Ascending aorta (tissue), 2 donors: ENCODE measurements at regions of chr19 and their contacts with region 1.

Region 1: GRCh38 chr19:14136509-14137281 is at the start of gene ASF1B:
- DNase-seq: peak; percentile 98 to 99
- H3K4me3 ChIP-seq: peak within 1 kb of the TSS; percentile 76 to 85
- H3K27ac ChIP-seq: peak within 1 kb of the TSS; percentile 98
- H3K4me1 ChIP-seq: peaks cover 11 to 21% of the 10 kb centered on the region in 2 donors
- H3K27me3 ChIP-seq: no peaks in the 10 kb centered on the region
- CTCF ChIP-seq: peak; percentile 86 to 91 (median 86)
- total RNA-seq, gene ASF1B: 7.8 TPM

Region 2: GRCh38 chr19:13880059-13881043 is 256.3 kb before region 1 on chr19:
- intact Hi-C with region 1: loop called (anchors 1 kb)
- DNase-seq: peak; percentile 92 to 99
- H3K4me3 ChIP-seq: peak overlapping the region; percentile 26 to 53
- H3K27ac ChIP-seq: peak overlapping the region; percentile 58 to 81
- H3K4me1 ChIP-seq: peaks cover 6 to 13% of the 10 kb centered on the region in 2 donors
- H3K27me3 ChIP-seq: no peaks in the 10 kb centered on the region
- CTCF ChIP-seq: peak; percentile 99 to 100 (median 99)

Region 3: GRCh38 chr19:14073261-14073924 is 63.3 kb before region 1 on chr19:
- intact Hi-C with region 1: loop called (anchors 1 kb)
- DNase-seq: peak in 1 of 2 donors; percentile 83
- H3K4me3 ChIP-seq: peak overlapping the region; percentile 62 to 73
- H3K27ac ChIP-seq: peak overlapping the region; percentile 90 to 94
- H3K4me1 ChIP-seq: peaks cover 0 to 12% of the 10 kb centered on the region in 2 donors
- H3K27me3 ChIP-seq: no peaks in the 10 kb centered on the region
- CTCF ChIP-seq: peak in 1 of 3 experiments; percentile 97

Region 4: GRCh38 chr19:14117668-14118164 is 19.0 kb before region 1 on chr19 and contains the start of gene PRKACA:
- intact Hi-C with region 1: loop called (anchors 1 kb)
- DNase-seq: peak; percentile 97 to 99
- H3K4me3 ChIP-seq: peak within 1 kb of the TSS; percentile 71 to 96
- H3K27ac ChIP-seq: peak within 1 kb of the TSS; percentile 92 to 99
- H3K4me1 ChIP-seq: peaks cover 23 to 51% of the 10 kb centered on the region in 2 donors
- H3K27me3 ChIP-seq: no peaks in the 10 kb centered on the region
- CTCF ChIP-seq: no peak
- total RNA-seq, gene PRKACA: 92.6 TPM

Region 5: GRCh38 chr19:14405758-14406644 is 269.3 kb after region 1 on chr19:
- intact Hi-C with region 1: loop called (anchors 2 kb)
- DNase-seq: peak; percentile 31 to 89
- H3K4me3 ChIP-seq: no peak overlapping the region
- H3K27ac ChIP-seq: peak overlapping the region; percentile 71 to 75
- H3K4me1 ChIP-seq: peaks cover 2 to 8% of the 10 kb centered on the region in 2 donors
- H3K27me3 ChIP-seq: no peaks in the 10 kb centered on the region
- CTCF ChIP-seq: peak; percentile 90 to 97 (median 94)

Region 6: DNA sequence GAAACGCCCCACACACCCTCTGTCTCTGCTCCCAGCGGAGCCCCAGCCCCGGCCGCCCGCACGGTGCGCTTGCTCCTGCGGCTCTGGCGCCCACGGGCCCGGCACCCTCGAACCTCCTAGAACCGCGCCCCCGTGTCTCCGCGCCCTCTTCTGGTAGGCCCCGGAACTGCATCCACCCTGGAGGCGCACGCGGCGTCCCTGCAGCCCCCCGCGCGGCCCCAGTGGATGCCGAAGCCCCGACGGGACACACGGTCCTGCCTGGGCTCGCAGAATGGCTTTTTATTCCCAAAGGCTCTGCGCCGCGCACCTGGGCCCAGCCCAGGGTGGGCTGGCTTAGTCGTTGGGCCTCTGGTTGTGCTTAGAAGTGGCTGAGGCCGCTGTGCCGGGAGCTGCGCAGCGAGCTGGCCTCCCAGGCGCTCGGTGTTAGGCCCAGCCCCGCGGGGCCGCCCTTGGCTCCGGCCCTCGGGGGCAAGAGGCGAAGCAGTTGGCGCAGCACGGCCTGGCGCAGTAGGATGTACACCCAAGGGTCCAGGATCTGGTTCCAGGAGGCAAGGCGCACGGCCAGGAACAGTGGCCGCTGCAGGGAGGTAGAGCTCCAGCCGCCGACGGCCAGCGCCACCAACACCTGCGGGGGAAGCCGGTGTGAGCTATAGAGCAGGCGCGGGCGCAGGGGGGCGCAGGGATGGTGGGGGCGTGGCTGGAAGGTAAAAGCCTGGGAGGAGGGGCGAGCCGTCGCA is 335.7 kb after region 1 on chr19:
- intact Hi-C with region 1: loop called (anchors 5 kb)
- DNase-seq: peak in 1 of 2 donors; percentile 79
- H3K4me3 ChIP-seq: peak overlapping the region; percentile 27 to 34
- H3K27ac ChIP-seq: no peak overlapping the region
- H3K4me1 ChIP-seq: peaks cover 8 to 21% of the 10 kb centered on the region in 2 donors
- H3K27me3 ChIP-seq: peaks cover 4% of the 10 kb centered on the region
- CTCF ChIP-seq: peak; percentile 94 to 100 (median 99)